ENCODE measurements at regions of chr1 and their contacts with region 1.

Region 1: DNA sequence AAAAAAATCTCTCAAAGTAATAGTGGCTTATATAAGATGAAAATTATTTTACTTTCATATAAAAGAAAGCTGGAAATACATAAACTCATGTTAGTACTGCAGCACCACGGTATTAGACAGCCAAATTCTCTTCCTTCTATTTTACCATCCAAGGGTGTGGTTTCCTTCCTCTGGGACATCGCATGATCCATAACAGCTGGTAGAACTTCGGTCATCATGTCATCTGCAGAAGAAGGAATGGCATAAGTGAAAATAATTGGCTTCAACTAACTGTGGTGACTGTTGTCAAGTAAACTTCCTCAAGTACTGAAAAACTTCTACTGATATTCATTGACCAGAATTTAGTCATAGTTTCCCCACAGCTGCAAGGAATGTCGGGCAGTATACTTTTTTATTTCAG is 28.3 kb upstream of the IFI44L start:
- DNase-seq: no peak
- H3K4me3 ChIP-seq: no peak overlapping the region
- H3K27ac ChIP-seq: no peak overlapping the region
- H3K4me1 ChIP-seq: peaks cover 8% of the 10 kb centered on the region
- H3K27me3 ChIP-seq: no peaks in the 10 kb centered on the region
- CTCF ChIP-seq: no peak

Region 2: DNA sequence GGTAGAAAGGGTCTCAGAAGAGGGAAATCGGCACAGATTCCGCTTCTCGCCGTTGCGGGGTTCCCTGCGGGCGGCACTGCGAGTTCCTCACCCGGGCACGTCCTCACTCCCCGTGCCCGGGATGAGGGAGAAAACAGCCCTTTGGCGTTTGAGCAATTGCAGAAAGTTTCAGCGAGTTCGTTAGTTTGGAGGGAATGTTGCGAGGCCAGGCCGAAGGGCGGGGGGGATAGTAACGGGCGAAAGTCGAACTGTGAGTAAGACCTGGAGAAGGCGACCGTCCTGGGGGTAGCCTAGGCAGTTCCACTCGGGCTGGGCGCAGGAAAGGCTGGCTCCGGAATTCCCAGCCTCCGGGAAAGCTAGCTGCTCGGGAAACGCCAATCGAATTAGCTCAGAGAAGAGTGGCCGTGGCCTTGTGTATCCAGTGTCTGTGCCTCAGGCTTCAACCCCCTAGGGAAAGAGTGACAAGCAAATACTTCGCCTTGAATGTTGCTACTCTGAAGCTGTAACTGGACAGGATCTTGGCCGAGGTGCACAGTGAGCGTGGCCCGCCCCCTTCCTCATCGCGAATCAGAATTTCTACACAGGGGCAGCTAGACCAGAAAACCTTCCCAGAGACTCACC is 100.4 kb before region 1 on chr1:
- CTCF ChIA-PET with region 1: no interaction called
- dilution Hi-C with region 1: no loop called
- in situ Hi-C with region 1: no loop called
- intact Hi-C with region 1: loop called (anchors 10 kb)
- DNase-seq: peak; percentile 36
- H3K4me3 ChIP-seq: peak overlapping the region; percentile 36 to 60 (median 56)
- H3K27ac ChIP-seq: no peak overlapping the region
- H3K4me1 ChIP-seq: peaks cover 8% of the 10 kb centered on the region
- H3K27me3 ChIP-seq: peaks cover 4% of the 10 kb centered on the region
- CTCF ChIP-seq: no peak

Region 3: GRCh38 chr1:78649628-78650027 is 57.7 kb after region 1 on chr1 and contains the start of gene IFI44:
- CTCF ChIA-PET with region 1: no interaction called
- dilution Hi-C with region 1: no loop called
- in situ Hi-C with region 1: no loop called
- intact Hi-C with region 1: no loop called
- DNase-seq: peak; percentile 71
- H3K4me3 ChIP-seq: peak within 1 kb of the TSS; percentile 19 to 49 (median 24)
- H3K27ac ChIP-seq: peak within 1 kb of the TSS; percentile 15
- H3K4me1 ChIP-seq: peaks cover 6% of the 10 kb centered on the region
- H3K27me3 ChIP-seq: no peaks in the 10 kb centered on the region
- CTCF ChIP-seq: no peak
- total RNA-seq, gene IFI44: 1.3 to 5.0 TPM